ENCODE measurements at regions of chr6 and their contacts with region 1.

Region 1: GRCh38 chr6:31665501-31666336 is at the start of gene CSNK2B:
- DNase-seq: peak; percentile 98 to 99
- ATAC-seq: peak; percentile 89 to 94 (median 92)
- H3K4me3 ChIP-seq: peak within 1 kb of the TSS; percentile 59 to 98 (median 82)
- H3K27ac ChIP-seq: peak within 1 kb of the TSS; percentile 70 to 98 (median 96)
- H3K4me1 ChIP-seq: peaks cover 14 to 62% (median 52%) of the 10 kb centered on the region in 9 donors
- H3K27me3 ChIP-seq: no peaks in the 10 kb centered on the region
- CTCF ChIP-seq: peak in 5 of 9 donors; percentile 12 to 42 (median 27)
- total RNA-seq, gene CSNK2B: 101 to 153 (median 115) TPM

Region 2: GRCh38 chr6:31541658-31542521 is 123.8 kb before region 1 on chr6 and contains the start of gene DDX39B:
- intact Hi-C with region 1: loop called in 1 of 10 experiments (anchors 5 kb)
- DNase-seq: peak; percentile 93 to 96
- ATAC-seq: peak; percentile 93 to 96 (median 94)
- H3K4me3 ChIP-seq: peak within 1 kb of the TSS; percentile 42 to 87 (median 73)
- H3K27ac ChIP-seq: peak within 1 kb of the TSS; percentile 81 to 100 (median 93)
- H3K4me1 ChIP-seq: peaks cover 22 to 55% (median 41%) of the 10 kb centered on the region in 9 donors
- H3K27me3 ChIP-seq: no peaks in the 10 kb centered on the region
- CTCF ChIP-seq: no peak
- total RNA-seq, gene DDX39B: 154 to 193 (median 172) TPM

Region 3: GRCh38 chr6:31702819-31703522 is 37.3 kb after region 1 on chr6 and contains the start of gene ABHD16A:
- intact Hi-C with region 1: no loop called
- DNase-seq: peak; percentile 99
- ATAC-seq: peak; percentile 98 to 99 (median 99)
- H3K4me3 ChIP-seq: peak within 1 kb of the TSS; percentile 56 to 89 (median 78)
- H3K27ac ChIP-seq: peak within 1 kb of the TSS; percentile 91 to 99 (median 96)
- H3K4me1 ChIP-seq: peaks cover 11 to 33% (median 22%) of the 10 kb centered on the region in 9 donors
- H3K27me3 ChIP-seq: no peaks in the 10 kb centered on the region
- CTCF ChIP-seq: peak in 3 of 9 donors; percentile 12 to 28 (median 27)
- total RNA-seq, gene ABHD16A: 24.3 to 40.3 (median 28.7) TPM

Region 4: DNA sequence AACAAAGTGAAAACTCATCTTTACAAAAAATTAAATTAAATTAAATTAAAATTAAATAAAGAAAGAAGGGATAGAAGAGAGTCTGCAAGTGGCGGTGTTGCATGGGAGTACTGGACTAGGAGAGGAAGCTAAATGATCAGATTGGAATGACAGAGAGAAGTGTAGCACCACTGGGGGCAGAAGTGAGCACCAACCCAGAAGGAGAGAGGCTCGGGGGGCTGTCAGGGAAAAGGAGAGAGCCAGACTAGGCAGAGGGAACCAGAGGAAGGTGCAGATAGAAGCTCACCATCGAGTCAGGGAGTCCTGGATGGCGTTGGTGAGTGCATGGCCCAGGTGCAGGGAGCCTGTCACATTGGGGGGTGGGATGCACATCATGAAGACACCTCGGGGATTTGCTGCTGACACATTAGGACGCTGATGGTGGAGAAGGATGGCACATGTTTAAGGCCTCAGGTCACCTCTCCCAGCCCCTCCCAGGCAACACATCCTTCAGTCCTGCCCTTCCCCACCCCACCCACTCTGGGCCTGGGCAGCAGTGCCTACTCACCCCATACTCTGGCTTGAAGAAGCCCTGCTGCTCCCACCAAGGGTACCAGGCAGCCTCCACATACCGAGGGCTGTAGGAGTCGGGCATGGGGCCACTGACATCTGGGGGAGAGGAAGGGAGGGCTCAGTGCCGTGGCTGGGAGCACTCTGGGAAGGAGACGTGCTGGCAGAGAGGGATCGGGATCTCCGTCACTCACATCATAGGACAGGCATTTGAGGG is 125.8 kb after region 1 on chr6:
- intact Hi-C with region 1: no loop called
- DNase-seq: peak in 1 of 2 donors; percentile 32
- ATAC-seq: no peak
- H3K4me3 ChIP-seq: no peak overlapping the region
- H3K27ac ChIP-seq: no peak overlapping the region
- H3K4me1 ChIP-seq: peaks cover 5 to 30% (median 14%) of the 10 kb centered on the region in 9 donors
- H3K27me3 ChIP-seq: no peaks in the 10 kb centered on the region
- CTCF ChIP-seq: peak in 8 of 9 donors; percentile 24 to 64 (median 54)

Region 5: GRCh38 chr6:31952140-31952805 is 286.6 kb after region 1 on chr6:
- intact Hi-C with region 1: loop called in 2 of 10 experiments (anchors 5 to 10 kb)
- DNase-seq: peak in 1 of 2 donors; percentile 62
- ATAC-seq: peak in 7 of 8 donors; percentile 23 to 72 (median 68)
- H3K4me3 ChIP-seq: no peak overlapping the region
- H3K27ac ChIP-seq: peak overlapping the region in 1 of 10 donors; percentile 11
- H3K4me1 ChIP-seq: peaks cover 0 to 2% (median 0%) of the 10 kb centered on the region in 9 donors
- H3K27me3 ChIP-seq: no peaks in the 10 kb centered on the region
- CTCF ChIP-seq: peak; percentile 46 to 86 (median 70)

Region 6: DNA sequence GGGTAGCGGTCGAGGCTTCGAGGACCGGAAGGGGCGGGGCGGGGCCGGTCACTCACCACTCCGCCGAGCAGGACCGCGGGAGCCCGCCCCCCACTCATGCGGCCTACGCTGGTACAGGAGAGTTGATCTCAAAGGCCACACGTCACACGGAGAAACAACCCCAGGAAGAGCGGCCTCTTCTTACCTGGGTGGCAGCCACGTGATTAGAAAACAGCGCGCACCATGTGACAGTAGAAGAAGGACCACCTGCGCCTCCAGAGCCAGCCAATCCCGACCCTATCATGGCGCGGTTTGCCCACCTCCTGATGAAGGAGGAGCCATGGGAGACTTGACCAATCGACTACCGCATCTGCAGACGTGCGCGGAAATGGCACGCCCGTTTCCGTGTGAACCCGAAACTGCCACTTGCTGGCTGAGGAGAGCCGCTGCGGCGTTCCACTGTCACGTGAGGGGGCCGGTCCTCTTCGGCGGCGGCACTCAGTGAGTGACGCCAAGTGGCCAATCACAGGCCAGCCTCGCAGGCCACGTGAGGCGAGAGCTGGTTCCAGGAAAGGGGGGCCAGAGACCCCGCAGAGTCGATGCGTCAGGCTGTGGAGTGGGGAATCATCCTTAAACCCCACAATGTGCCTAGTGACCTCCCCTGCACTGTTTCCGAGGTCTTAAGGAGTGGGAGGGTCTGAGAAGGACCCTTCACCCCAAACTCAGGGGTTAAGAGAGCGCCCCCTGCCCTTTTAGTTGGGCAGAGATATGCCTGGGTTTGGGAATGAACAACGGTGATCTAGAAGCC is 1752.4 kb after region 1 on chr6 and contains the start of gene CUTA:
- intact Hi-C with region 1: loop called in 1 of 10 experiments (anchors 10 kb)
- DNase-seq: peak; percentile 99
- ATAC-seq: peak; percentile 94 to 98 (median 96)
- H3K4me3 ChIP-seq: peak within 1 kb of the TSS; percentile 40 to 80 (median 70)
- H3K27ac ChIP-seq: peak within 1 kb of the TSS; percentile 59 to 94 (median 90)
- H3K4me1 ChIP-seq: peaks cover 16 to 48% (median 41%) of the 10 kb centered on the region in 9 donors
- H3K27me3 ChIP-seq: no peaks in the 10 kb centered on the region
- CTCF ChIP-seq: peak in 8 of 9 donors; percentile 29 to 69 (median 46)
- total RNA-seq, gene CUTA: 99.8 to 132 (median 114) TPM

Measured in heart right ventricle (tissue), 16 donors.